ENCODE measurements at regions of chr6 and their contacts with region 1.

Region 1: GRCh38 chr6:166313255-166314070 is 5.3 kb upstream of the PRR18 start:
- DNase-seq: no peak
- H3K4me3 ChIP-seq: no peak overlapping the region
- H3K27ac ChIP-seq: no peak overlapping the region
- H3K27me3 ChIP-seq: peaks cover 17% of the 10 kb centered on the region
- CTCF ChIP-seq: peak; percentile 78

Region 2: DNA sequence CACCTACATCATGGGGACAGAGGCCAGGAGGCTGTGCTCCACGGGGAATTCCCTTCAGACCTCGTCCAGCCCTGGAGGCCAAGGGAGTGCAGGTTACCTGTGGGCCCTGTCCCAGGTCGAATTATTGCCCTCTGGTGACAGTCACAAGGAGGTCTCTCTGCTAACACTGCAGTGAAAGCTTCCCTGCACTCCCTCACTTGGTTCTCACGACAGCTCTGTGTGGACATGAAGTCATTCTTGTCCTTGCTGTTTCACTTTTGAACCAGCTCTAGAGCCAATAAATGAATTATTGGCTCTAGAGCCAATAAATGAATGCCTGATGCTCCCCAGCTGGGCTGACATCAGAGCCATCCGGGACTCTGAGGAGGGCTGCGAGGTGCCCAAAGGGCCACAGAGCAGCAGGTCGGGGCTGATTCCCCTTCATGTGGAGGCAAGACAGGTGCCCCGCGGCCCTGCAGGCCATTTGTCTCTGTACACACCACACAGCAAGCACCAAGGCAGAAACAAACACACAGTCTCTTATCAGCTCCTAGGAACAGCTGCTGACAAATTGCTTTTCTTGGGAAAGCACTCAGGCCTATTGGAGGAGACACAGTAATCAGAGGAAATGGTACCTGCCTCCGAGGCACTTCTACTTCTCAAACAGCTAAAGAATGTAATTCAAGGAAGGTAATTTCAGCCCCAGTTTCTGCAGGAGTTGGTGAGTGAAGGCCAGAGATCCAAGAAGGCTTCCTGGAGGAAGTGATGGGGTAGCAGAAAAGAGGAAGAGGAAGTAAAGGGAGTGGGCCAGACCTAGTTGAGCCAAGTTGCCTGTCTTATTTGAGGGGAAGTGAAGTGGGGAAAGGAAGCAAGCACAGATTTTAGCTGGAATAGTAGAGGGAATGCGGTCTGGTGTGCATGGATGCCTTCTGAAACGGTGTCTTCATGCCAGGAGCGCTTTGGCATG is 118.3 kb before region 1 on chr6:
- CTCF ChIA-PET with region 1: no interaction called
- POLR2A ChIA-PET with region 1: no interaction called
- DNase-seq: no peak
- H3K4me3 ChIP-seq: no peak overlapping the region
- H3K27ac ChIP-seq: no peak overlapping the region
- H3K27me3 ChIP-seq: no peaks in the 10 kb centered on the region
- CTCF ChIP-seq: no peak

Region 3: GRCh38 chr6:166325383-166326042 is 12.1 kb after region 1 on chr6:
- CTCF ChIA-PET with region 1: interaction called, 27 read pairs
- POLR2A ChIA-PET with region 1: no interaction called
- DNase-seq: no peak
- H3K4me3 ChIP-seq: no peak overlapping the region
- H3K27ac ChIP-seq: no peak overlapping the region
- H3K27me3 ChIP-seq: no peaks in the 10 kb centered on the region
- CTCF ChIP-seq: no peak